Ascending aorta (tissue), 2 donors: ENCODE measurements at regions of chr13 and their contacts with region 1.

Region 1: DNA sequence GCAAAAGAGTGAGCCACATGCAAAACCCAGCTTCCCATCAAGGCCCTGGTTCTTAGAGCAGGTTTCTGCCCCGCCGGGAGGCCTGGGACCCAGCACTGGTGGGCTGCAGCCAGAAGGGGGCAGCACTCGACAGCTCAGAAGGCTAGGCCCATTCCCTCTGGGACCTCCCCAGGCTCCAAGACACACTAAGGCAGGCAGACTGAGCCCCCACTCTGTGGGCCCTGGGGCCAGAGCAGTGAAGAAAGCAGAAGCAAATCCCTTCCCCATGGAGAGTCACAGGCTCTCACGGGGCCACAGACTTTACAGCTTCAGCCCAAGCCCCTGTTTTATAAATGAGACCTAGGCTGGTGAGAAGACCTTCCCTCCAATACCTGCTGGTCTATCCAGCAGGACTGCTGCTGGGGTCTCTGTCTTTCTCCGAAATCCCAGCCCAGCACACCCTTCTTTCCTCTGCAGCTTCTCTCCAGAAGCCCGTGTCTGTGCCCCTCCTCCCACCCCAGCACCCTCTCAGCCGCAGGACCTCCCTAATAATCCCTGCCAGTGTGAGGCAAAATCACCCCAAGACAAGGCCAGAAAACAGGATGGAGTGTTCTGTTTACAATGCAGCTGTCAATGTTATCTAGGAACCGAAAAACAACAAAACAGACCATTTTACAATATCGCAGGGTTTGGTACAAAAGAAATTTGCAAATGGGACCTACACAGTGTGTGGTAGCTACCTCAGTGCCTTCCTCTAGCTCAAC is 109.3 kb downstream of the ABCC4 start:
- DNase-seq: peak in 1 of 2 donors; percentile 70
- H3K4me3 ChIP-seq: no peak overlapping the region
- H3K27ac ChIP-seq: no peak overlapping the region
- H3K4me1 ChIP-seq: no peaks in the 10 kb centered on the region
- H3K27me3 ChIP-seq: no peaks in the 10 kb centered on the region
- CTCF ChIP-seq: peak; percentile 48 to 63 (median 57)

Region 2: GRCh38 chr13:95296326-95296925 is 104.4 kb after region 1 on chr13:
- intact Hi-C with region 1: no loop called
- DNase-seq: no peak
- H3K4me3 ChIP-seq: no peak overlapping the region
- H3K27ac ChIP-seq: no peak overlapping the region
- H3K4me1 ChIP-seq: no peaks in the 10 kb centered on the region
- H3K27me3 ChIP-seq: no peaks in the 10 kb centered on the region
- CTCF ChIP-seq: peak in 2 of 3 experiments; percentile 31 to 48

Region 3: DNA sequence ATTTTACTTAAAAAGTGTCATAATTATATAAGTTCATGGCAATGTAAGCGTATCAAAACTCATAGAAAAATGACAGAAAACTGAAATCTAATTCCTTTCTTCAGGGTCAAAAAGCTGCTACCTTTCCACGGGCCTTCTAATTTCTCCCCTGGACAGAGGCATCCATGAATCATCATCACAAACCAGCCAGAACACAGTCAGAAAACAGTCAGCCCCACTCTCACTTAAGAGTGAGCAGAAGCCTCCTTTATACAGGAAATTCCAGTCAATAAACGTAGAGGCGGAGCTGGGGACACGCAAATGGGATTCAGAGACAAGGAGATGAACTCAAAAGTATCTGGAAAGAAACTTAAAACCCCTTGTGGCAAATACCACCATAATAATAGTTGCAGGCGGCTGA is 163.5 kb after region 1 on chr13:
- intact Hi-C with region 1: no loop called
- DNase-seq: no peak
- H3K4me3 ChIP-seq: no peak overlapping the region
- H3K27ac ChIP-seq: no peak overlapping the region
- H3K4me1 ChIP-seq: no peaks in the 10 kb centered on the region
- H3K27me3 ChIP-seq: no peaks in the 10 kb centered on the region
- CTCF ChIP-seq: no peak

Region 4: GRCh38 chr13:95378603-95379002 is 186.6 kb after region 1 on chr13:
- intact Hi-C with region 1: loop called (anchors 1 kb)
- DNase-seq: no peak
- H3K4me3 ChIP-seq: no peak overlapping the region
- H3K27ac ChIP-seq: no peak overlapping the region
- H3K4me1 ChIP-seq: peaks cover 0 to 3% of the 10 kb centered on the region in 2 donors
- H3K27me3 ChIP-seq: no peaks in the 10 kb centered on the region
- CTCF ChIP-seq: no peak

Region 5: DNA sequence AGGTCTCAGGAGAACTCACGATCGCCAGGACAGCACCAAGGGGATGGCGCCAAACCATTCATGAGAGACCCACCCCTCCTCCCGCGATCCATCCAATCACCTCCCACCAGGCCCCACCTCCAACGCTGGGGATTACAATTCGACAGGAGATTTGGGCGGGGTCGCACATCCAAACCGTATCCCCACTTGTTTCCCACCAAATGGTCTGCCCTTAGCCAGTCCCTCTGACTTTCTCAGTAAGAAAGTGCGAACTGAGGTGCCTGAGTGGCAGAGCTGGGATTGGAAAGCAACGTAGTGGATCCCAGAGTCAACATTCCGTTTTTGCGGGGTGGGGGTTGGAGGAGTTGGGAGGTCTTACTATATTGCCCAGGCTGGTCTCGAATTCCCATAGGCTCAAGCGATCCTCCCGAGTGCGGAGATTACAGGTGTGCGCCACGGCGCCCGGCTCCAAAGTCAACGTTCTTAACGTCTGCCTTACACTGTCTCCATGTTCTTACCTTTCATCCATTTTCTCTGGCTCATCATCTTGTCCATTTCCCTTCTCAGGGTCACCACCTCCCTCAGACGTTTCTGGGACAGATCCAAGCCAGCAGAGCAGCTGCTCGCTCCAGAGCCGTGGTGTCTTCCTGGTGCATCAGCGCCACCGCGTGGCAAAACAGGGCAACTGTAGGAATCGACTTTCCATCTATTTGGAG is 212.0 kb after region 1 on chr13:
- intact Hi-C with region 1: loop called (anchors 1 kb)
- DNase-seq: peak; percentile 23 to 86
- H3K4me3 ChIP-seq: peak overlapping the region; percentile 49 to 64
- H3K27ac ChIP-seq: no peak overlapping the region
- H3K4me1 ChIP-seq: no peaks in the 10 kb centered on the region
- H3K27me3 ChIP-seq: no peaks in the 10 kb centered on the region
- CTCF ChIP-seq: peak; percentile 77 to 94 (median 86)